ENCODE measurements at regions of chr9 and their contacts with region 1.

Region 1: DNA sequence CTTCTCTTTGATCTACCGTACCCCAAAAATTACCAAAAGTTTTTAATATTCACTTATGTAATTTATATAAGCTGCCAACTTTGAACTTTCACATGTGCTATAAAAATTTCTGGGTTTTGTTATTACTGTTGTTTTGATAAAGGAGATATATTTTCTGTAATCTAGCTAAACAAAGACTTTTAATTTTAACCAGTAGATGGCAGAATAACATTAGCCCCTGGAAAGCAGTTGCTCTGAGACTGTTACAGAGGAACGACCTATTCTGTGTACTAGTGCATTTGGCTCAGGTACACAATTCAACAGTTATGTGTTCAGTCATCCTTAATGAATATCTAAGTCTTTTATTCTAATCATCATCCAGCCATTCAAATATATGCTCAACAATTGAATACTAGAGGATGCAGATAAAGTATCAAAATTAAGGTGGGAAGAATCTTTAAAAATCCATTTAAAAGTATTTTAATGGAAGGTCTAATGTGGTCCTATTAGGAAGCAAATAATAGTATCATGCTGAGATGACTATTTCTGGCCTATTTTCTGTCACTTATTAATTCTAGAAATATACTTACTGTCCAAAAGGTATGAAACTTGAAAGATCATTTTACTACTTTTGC is 8.6 kb downstream of the KLHL9 start:
- DNase-seq: no peak

Region 2: GRCh38 chr9:21395778-21396717 is 69.4 kb after region 1 on chr9:
- intact Hi-C with region 1: loop called (anchors 1 kb)
- DNase-seq: peak; percentile 51 to 94 (median 74)

Region 3: GRCh38 chr9:21413624-21414023 is 87.0 kb after region 1 on chr9:
- intact Hi-C with region 1: loop called (anchors 5 kb)
- DNase-seq: peak in 3 of 10 donors; percentile 37 to 78 (median 45)

Region 4: GRCh38 chr9:21455320-21455719 is 128.7 kb after region 1 on chr9:
- intact Hi-C with region 1: loop called (anchors 5 kb)
- DNase-seq: no peak

Region 5: DNA sequence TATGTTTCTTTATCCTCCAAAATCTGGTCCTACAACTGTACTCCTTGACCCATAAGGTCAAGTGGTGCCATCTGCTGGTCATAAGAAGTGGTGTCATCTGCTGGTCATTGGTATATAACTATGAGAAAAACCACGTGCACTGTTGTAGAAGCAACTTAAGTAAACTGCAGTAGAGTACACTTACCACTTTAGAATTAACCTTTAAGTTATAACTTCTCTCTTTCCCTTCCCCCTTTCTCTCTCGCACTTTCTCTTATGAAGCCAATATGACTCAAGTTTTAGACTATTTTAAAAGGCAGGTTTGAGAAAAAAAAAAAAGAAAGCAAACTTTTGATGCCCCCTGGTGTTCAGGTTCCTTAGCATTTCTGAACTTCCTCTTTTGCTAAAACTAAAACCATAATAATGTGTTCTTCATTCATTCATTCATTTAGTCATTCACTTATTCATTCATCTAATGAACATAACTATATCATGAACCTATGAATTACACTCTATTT is 463.0 kb after region 1 on chr9:
- intact Hi-C with region 1: loop called (anchors 10 kb)
- DNase-seq: peak in 5 of 10 donors; percentile 33 to 61 (median 51)

Measured in posterior cingulate gyrus (tissue), 11 donors.